ENCODE measurements at regions of chr13 and their contacts with region 1.

Region 1: GRCh38 chr13:24053519-24054251 is 106.8 kb upstream of the SPATA13 start:
- DNase-seq: peak; percentile 80
- ATAC-seq: peak; percentile 94
- H3K4me3 Mint-ChIP-seq: no peak overlapping the region
- H3K27ac Mint-ChIP-seq: no peak overlapping the region
- H3K4me1 Mint-ChIP-seq: peaks cover 22% of the 10 kb centered on the region
- H3K27me3 Mint-ChIP-seq: peaks cover 20% of the 10 kb centered on the region

Region 2: DNA sequence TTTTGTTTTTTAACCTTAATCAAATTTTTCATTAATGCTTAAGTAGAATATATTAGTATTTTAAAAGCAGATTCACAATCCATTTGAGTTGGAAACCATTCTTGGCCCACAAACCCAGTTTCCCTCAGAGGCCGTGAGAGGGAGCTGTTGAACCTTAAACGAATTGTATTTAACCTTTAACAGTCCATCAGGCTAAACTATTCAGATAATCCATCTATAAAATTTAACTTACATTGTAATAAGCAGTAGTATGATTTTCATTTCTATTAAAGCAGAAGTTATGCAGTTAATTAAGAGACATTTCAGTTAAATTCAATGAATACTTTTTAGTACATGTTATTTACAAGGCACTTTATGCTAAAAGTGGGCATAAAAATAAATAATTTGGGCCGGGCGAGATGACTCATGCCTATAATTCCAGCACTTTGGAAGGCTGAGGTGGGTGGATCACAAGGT is 33.3 kb before region 1 on chr13:
- CTCF ChIA-PET with region 1: interaction called, 22 read pairs
- DNase-seq: peak; percentile 65
- ATAC-seq: peak; percentile 45
- H3K4me3 Mint-ChIP-seq: no peak overlapping the region
- H3K27ac Mint-ChIP-seq: no peak overlapping the region
- H3K4me1 Mint-ChIP-seq: peaks cover 10% of the 10 kb centered on the region
- H3K27me3 Mint-ChIP-seq: no peaks in the 10 kb centered on the region

Region 3: DNA sequence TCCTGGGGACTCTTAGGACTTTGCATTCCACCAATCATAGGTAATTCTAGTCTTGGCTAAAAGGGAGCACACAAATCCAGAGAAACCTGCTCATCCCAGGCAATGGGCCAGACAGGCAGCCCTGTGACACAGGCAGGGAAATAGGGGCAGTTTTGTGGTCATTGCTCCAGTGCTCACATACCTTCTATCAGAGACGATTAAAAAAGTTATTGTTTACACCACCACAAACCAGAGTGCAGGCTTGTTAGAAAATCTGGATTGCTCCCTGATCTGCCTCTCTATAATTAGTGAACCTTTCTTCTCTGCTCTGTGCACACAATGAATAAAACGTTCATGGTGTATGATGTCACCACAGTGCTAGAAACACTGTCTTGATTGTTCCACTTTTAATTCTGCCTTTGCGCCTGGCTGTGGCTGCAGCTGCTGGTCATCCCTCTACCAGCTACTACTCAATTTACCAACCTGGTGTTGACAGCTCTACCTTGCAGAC is 14.8 kb before region 1 on chr13:
- CTCF ChIA-PET with region 1: interaction called, 12 read pairs
- DNase-seq: no peak
- ATAC-seq: peak; percentile 40
- H3K4me3 Mint-ChIP-seq: peak overlapping the region; percentile 37
- H3K27ac Mint-ChIP-seq: peak overlapping the region; percentile 77
- H3K4me1 Mint-ChIP-seq: peaks cover 40% of the 10 kb centered on the region
- H3K27me3 Mint-ChIP-seq: peaks cover 4% of the 10 kb centered on the region

Region 4: GRCh38 chr13:24228852-24229458 is 175.3 kb after region 1 on chr13:
- CTCF ChIA-PET with region 1: interaction called, 10 read pairs
- DNase-seq: peak; percentile 61
- ATAC-seq: peak; percentile 17
- H3K4me3 Mint-ChIP-seq: no peak overlapping the region
- H3K27ac Mint-ChIP-seq: no peak overlapping the region
- H3K4me1 Mint-ChIP-seq: peaks cover 64% of the 10 kb centered on the region
- H3K27me3 Mint-ChIP-seq: no peaks in the 10 kb centered on the region